CD4-positive, alpha-beta memory T cell (primary cell): ENCODE measurements at regions of chr10 and their contacts with region 1.

Region 1: GRCh38 chr10:23344241-23344841 is at the start of gene C10orf67:
- DNase-seq: peak in 1 of 5 donors; percentile 24
- H3K4me3 ChIP-seq: peak within 1 kb of the TSS; percentile 56 to 57
- H3K4me3 Mint-ChIP-seq: peak within 1 kb of the TSS; percentile 88 to 95 (median 92)
- H3K27ac ChIP-seq: peak within 1 kb of the TSS; percentile 18
- H3K27ac Mint-ChIP-seq: peak within 1 kb of the TSS; percentile 36 to 96 (median 88)
- H3K4me1 ChIP-seq: peaks cover 49% of the 10 kb centered on the region
- H3K4me1 Mint-ChIP-seq: peaks cover 21 to 46% (median 40%) of the 10 kb centered on the region in 4 donors
- H3K27me3 ChIP-seq: no peaks in the 10 kb centered on the region
- H3K27me3 Mint-ChIP-seq: peaks cover 0 to 1% of the 10 kb centered on the region in 2 donors
- total RNA-seq, gene C10orf67: not detected

Region 2: DNA sequence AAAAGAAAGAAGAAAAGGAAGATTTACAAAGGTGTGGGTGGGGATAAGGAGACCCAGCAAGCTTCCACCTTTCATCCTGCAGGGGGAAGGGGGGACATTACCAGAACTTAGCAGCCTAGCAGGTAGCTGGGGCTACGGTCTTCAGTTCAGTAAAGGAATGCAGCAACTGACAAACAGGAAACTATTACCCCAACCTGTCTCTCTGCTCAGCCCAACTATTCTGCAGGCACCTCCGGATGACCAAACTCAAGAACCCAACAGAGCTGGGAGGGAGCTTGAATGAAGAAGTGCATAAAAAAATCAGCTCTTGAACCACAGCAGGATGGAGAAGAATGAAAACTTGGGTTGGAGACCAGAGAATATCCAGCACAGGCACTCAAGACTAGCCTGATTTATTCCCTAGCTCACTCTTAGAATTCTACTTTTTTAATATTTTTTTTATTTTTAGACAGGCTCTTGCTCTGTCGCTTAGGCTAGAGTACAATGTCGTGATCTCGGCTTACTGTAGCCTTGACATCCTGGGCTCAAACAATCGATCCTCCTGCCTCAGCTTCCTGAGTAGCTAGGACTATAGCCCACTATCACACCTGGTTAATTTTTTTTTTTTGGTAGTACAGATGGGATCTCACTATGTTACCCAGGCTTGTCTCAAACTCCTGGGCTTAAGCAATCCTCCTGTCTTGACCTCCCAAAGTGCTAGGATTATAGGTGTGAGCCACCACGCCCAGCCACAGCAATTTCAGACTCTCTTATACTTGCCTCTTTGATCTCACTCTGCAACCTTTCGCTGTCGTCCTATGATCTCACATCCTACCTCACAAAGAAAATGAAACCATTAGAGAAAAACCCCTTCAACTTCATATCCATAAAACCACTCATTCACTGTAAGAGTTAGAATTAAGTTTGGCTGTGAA is 18.8 kb after region 1 on chr10:
- CTCF ChIA-PET with region 1: interaction called, 6 read pairs
- POLR2A ChIA-PET with region 1: interaction called, 6 read pairs
- intact Hi-C with region 1: loop called (anchors 1 kb)
- DNase-seq: peak; percentile 64 to 77 (median 74)
- H3K4me3 ChIP-seq: peak overlapping the region; percentile 34 to 36
- H3K4me3 Mint-ChIP-seq: peak overlapping the region; percentile 61 to 91 (median 85)
- H3K27ac ChIP-seq: peak overlapping the region; percentile 57
- H3K27ac Mint-ChIP-seq: peak overlapping the region; percentile 83 to 98 (median 97)
- H3K4me1 ChIP-seq: peaks cover 51% of the 10 kb centered on the region
- H3K4me1 Mint-ChIP-seq: peaks cover 36 to 54% (median 44%) of the 10 kb centered on the region in 4 donors
- H3K27me3 ChIP-seq: no peaks in the 10 kb centered on the region
- H3K27me3 Mint-ChIP-seq: no peaks in the 10 kb centered on the region

Region 3: GRCh38 chr10:23496727-23497126 is 152.4 kb after region 1 on chr10:
- CTCF ChIA-PET with region 1: no interaction called
- POLR2A ChIA-PET with region 1: no interaction called
- intact Hi-C with region 1: no loop called
- DNase-seq: no peak
- H3K4me3 ChIP-seq: no peak overlapping the region
- H3K4me3 Mint-ChIP-seq: no peak overlapping the region
- H3K27ac ChIP-seq: no peak overlapping the region
- H3K27ac Mint-ChIP-seq: no peak overlapping the region
- H3K4me1 ChIP-seq: no peaks in the 10 kb centered on the region
- H3K4me1 Mint-ChIP-seq: no peaks in the 10 kb centered on the region
- H3K27me3 ChIP-seq: no peaks in the 10 kb centered on the region
- H3K27me3 Mint-ChIP-seq: peaks cover 6 to 12% of the 10 kb centered on the region in 2 donors

Region 4: DNA sequence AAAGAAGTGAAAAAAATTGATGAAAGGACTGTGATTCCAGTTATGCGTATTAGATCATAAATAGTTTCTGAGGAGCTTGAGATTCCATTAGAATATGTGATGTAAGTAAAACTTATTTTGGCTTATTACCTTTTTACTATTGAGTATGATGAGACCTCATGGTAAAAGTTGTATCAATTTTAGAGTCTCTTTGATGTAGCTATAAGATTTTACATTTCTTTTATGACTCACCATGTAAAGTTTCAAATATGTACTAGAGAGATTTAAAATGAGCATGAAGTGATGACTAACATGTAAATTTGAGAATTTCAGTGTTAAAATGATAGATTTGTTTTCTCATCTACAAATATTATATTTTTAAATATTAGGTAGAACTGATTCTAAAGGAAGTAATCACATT is 371.0 kb after region 1 on chr10:
- CTCF ChIA-PET with region 1: no interaction called
- POLR2A ChIA-PET with region 1: no interaction called
- intact Hi-C with region 1: no loop called
- DNase-seq: no peak
- H3K4me3 ChIP-seq: no peak overlapping the region
- H3K4me3 Mint-ChIP-seq: no peak overlapping the region
- H3K27ac ChIP-seq: no peak overlapping the region
- H3K27ac Mint-ChIP-seq: no peak overlapping the region
- H3K4me1 ChIP-seq: no peaks in the 10 kb centered on the region
- H3K4me1 Mint-ChIP-seq: no peaks in the 10 kb centered on the region
- H3K27me3 ChIP-seq: no peaks in the 10 kb centered on the region
- H3K27me3 Mint-ChIP-seq: peaks cover 7 to 14% of the 10 kb centered on the region in 2 donors